CD8-positive, alpha-beta T cell (primary cell): ENCODE measurements at regions of chr11 and their contacts with region 1.

Region 1: GRCh38 chr11:128279866-128280265 is 307.5 kb downstream of the ETS1 start:
- DNase-seq: no peak
- ATAC-seq: no peak
- H3K4me3 ChIP-seq: no peak overlapping the region
- H3K4me3 Mint-ChIP-seq: no peak overlapping the region
- H3K27ac ChIP-seq: no peak overlapping the region
- H3K27ac Mint-ChIP-seq: no peak overlapping the region
- H3K4me1 ChIP-seq: peaks cover 6% of the 10 kb centered on the region
- H3K4me1 Mint-ChIP-seq: peaks cover 13% of the 10 kb centered on the region
- H3K27me3 ChIP-seq: no peaks in the 10 kb centered on the region
- H3K27me3 Mint-ChIP-seq: no peaks in the 10 kb centered on the region
- CTCF ChIP-seq: no peak

Region 2: DNA sequence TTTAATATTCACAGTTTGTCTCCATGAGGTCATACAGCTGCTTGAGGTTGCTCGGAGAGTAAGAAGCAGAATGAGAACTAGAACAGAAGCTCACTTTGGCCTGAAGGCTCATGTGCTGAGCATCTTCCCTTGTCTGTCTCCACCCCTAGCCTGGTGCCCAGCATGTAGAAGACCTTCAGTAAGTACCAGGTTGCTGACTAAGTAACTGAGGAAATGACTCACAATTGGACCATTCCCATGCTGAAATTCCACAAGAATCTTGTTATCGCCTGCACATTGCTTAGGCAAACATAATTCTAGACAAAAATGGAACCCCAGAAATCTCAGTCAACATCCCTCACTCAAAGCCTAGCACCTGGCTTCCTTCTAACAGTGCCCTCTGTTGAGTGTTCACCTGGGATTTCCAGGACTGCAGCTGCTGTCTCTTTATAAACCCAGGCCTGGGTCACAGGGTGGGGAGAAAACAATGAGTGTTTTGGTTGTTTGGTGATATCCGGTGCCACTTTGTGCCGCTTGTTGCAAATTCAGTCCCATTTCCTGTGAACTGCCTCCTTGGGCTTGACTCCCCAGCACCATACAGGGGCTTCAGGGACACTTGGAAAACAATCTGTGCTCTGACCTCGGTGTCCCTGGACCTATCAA is 99.3 kb before region 1 on chr11:
- CTCF ChIA-PET with region 1: no interaction called
- POLR2A ChIA-PET with region 1: no interaction called
- intact Hi-C with region 1: loop called in 1 of 2 experiments (anchors 5 kb)
- DNase-seq: peak in 1 of 9 experiments; percentile 23
- ATAC-seq: no peak
- H3K4me3 ChIP-seq: no peak overlapping the region
- H3K4me3 Mint-ChIP-seq: no peak overlapping the region
- H3K27ac ChIP-seq: no peak overlapping the region
- H3K27ac Mint-ChIP-seq: no peak overlapping the region
- H3K4me1 ChIP-seq: no peaks in the 10 kb centered on the region
- H3K4me1 Mint-ChIP-seq: no peaks in the 10 kb centered on the region
- H3K27me3 ChIP-seq: no peaks in the 10 kb centered on the region
- H3K27me3 Mint-ChIP-seq: no peaks in the 10 kb centered on the region
- CTCF ChIP-seq: no peak